Panc1 (cell line): ENCODE measurements at regions of chr12 and their contacts with region 1.

Region 1: GRCh38 chr12:94762259-94762942 is 112.0 kb upstream of the TMCC3 start:
- DNase-seq: peak; percentile 12
- ATAC-seq: no peak
- H3K4me3 ChIP-seq: no peak overlapping the region
- H3K27ac ChIP-seq: no peak overlapping the region
- H3K4me1 ChIP-seq: no peaks in the 10 kb centered on the region; the same call in 1 of the 2 replicates
- H3K27me3 ChIP-seq: no peaks in the 10 kb centered on the region
- CTCF ChIP-seq: no peak

Region 2: GRCh38 chr12:94545935-94546771 is 216.2 kb before region 1 on chr12:
- CTCF ChIA-PET with region 1: interaction called, 4 read pairs
- POLR2A ChIA-PET with region 1: no interaction called
- in situ Hi-C with region 1: no loop called
- intact Hi-C with region 1: loop called (anchors 10 kb)
- DNase-seq: peak; percentile 12
- ATAC-seq: peak; percentile 85
- H3K4me3 ChIP-seq: no peak overlapping the region
- H3K27ac ChIP-seq: no peak overlapping the region
- H3K4me1 ChIP-seq: no peaks in the 10 kb centered on the region
- H3K27me3 ChIP-seq: no peaks in the 10 kb centered on the region
- CTCF ChIP-seq: peak; percentile 59

Region 3: DNA sequence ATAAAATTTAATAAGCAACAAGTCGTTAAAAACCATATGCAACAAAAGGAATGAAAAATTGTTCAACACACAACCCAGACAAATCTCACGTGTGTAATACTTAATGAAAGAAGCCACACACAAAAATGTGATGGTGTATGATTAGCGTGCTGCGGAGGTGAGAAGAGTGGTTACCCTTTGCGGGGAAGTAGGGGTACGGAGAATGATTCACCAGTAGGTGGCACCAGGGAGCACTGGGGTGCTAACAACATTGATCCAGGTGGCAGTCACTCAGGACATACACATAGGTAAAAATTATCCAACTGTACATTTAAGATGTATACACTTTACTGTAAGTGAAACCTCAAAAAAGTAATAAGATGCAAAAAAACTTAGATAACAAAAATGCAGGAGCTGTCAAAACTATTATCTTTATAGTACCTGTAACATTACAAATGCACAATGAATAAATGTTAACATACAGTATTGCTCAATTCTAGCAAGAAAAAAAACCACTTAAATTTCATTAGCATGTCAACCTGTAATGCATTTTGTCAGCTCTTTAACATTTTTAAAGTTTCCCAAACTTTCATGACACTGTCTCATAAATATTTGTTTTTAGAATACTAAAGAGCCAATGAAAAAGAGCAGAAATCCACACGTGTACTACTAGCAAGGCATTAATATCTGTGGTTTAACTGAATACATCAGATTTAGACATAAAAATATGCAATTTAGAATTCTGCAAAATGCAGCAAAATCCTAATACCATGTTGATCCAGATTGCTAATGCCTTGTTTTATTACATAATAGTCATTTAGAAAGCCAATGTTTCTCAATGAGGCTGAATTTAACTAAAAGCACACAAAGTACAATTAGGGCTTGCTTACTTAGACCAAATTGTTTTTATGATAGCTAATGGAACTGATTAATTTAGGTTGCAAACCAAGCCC is 158.7 kb before region 1 on chr12:
- CTCF ChIA-PET with region 1: no interaction called
- POLR2A ChIA-PET with region 1: no interaction called
- in situ Hi-C with region 1: no loop called
- intact Hi-C with region 1: loop called (anchors 2 kb)
- DNase-seq: no peak
- ATAC-seq: peak; percentile 71; the same call in 1 of the 2 replicates
- H3K4me3 ChIP-seq: no peak overlapping the region
- H3K27ac ChIP-seq: no peak overlapping the region
- H3K4me1 ChIP-seq: no peaks in the 10 kb centered on the region
- H3K27me3 ChIP-seq: peaks cover 5% of the 10 kb centered on the region; the same call in 1 of the 2 replicates
- CTCF ChIP-seq: peak; percentile 91

Region 4: GRCh38 chr12:94725375-94726168 is 36.8 kb before region 1 on chr12:
- CTCF ChIA-PET with region 1: no interaction called
- POLR2A ChIA-PET with region 1: no interaction called
- in situ Hi-C with region 1: no loop called
- intact Hi-C with region 1: no loop called
- DNase-seq: no peak
- ATAC-seq: no peak; the same call in 1 of the 2 replicates
- H3K4me3 ChIP-seq: no peak overlapping the region
- H3K27ac ChIP-seq: no peak overlapping the region
- H3K4me1 ChIP-seq: no peaks in the 10 kb centered on the region
- H3K27me3 ChIP-seq: 0 out of 2 replicates have a peak, but pooled peaks cover 2% of the 10 kb centered on the region
- CTCF ChIP-seq: peak; percentile 40

Region 5: DNA sequence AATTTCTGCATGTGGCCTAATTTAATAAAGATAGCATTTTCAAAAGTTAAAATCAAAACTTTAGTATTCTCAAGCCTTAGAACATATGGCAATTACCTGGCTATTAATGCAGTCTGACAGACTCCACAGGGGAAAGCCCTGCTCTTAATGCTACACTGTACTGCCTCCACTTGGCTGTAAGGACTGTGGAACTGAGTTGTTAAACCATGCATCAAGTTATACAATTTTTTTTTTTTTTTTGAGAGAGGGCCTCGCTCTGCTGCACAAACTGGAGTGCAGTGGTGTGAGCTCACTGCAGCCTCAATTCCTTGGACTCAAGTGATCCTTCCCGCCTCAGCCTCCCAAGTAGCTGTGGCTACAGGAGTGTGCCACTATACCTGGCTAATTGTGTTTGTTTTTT is 260.1 kb after region 1 on chr12:
- CTCF ChIA-PET with region 1: no interaction called
- POLR2A ChIA-PET with region 1: interaction called, 11 read pairs
- in situ Hi-C with region 1: no loop called
- intact Hi-C with region 1: no loop called
- DNase-seq: no peak
- ATAC-seq: no peak
- H3K4me3 ChIP-seq: no peak overlapping the region
- H3K27ac ChIP-seq: no peak overlapping the region
- H3K4me1 ChIP-seq: no peaks in the 10 kb centered on the region
- H3K27me3 ChIP-seq: no peaks in the 10 kb centered on the region
- CTCF ChIP-seq: no peak